Activated T-helper 1 cell treated with anti-CD3 and anti-CD28 coated beads, Interleukin-12 subunit alpha, Interleukin-12 subunit beta, Interleukin-2, Interleukin-4 antibody, amounts not matched to agents 30 ng/mL and 10 ng/mL and 1 ng/mL, durations not matched to agents 14 hours and 24 hours and 36 hours (primary cell): ENCODE measurements at regions of chr9 and their contacts with region 1.

Region 1: DNA sequence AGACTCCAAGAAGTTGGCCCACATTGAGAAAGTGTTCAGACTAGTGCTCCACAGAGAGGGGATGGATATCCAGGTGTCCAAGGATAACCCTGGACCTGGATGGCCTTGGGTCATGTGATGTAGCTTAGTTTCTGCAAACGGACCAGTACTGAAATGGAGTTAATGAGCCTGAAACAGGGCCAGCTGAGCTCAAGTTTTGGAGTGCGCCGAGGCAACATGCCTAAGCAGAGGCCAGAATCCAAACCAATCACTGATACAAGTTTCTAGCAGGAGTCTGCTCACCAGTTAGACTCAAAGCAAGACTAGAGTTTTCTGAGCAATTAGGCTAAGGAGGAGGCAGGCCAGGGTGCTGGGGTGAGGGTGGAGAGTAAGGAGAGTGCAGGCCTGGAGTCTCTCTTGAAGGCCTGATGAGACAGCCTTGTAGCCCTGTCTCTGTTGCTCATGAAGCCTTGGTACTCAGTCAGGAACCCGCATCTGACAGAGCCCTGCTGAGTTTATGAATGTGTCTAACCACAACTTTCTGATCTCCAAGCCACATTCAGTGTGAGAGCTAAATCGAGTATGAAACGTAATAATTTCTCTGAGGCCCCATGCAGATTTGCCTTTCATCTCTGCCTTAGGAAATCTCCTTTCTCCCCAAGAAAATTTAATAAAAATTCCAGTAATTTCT is 68.9 kb upstream of the EQTN start:
- DNase-seq: peak; percentile 49
- H3K4me3 Mint-ChIP-seq: peak overlapping the region; percentile 9
- H3K27ac Mint-ChIP-seq: peak overlapping the region; percentile 56
- H3K4me1 Mint-ChIP-seq: peaks cover 32% of the 10 kb centered on the region
- H3K27me3 Mint-ChIP-seq: peaks cover 10% of the 10 kb centered on the region

Region 2: DNA sequence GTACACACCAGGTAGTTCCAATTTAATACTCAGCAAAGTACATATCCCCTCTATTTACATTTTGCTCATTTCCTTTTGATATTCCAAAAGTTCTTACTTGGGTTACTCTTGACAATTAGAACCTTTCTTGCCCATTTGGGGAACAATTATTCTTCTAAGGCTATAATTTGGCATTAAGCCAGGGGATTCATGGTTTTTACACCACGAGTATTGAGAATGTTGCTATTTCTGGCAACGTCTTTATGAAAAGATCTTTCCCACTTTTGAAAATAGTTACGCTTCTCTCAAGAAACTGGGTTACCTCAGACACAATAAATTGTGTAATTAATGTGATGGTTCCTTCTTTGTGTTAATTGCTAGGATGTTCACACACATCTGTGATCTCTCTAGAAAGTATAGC is 461.8 kb before region 1 on chr9:
- intact Hi-C with region 1: no loop called
- DNase-seq: no peak
- H3K4me3 Mint-ChIP-seq: no peak overlapping the region
- H3K27ac Mint-ChIP-seq: peak overlapping the region; percentile 2
- H3K4me1 Mint-ChIP-seq: no peaks in the 10 kb centered on the region
- H3K27me3 Mint-ChIP-seq: no peaks in the 10 kb centered on the region

Region 3: DNA sequence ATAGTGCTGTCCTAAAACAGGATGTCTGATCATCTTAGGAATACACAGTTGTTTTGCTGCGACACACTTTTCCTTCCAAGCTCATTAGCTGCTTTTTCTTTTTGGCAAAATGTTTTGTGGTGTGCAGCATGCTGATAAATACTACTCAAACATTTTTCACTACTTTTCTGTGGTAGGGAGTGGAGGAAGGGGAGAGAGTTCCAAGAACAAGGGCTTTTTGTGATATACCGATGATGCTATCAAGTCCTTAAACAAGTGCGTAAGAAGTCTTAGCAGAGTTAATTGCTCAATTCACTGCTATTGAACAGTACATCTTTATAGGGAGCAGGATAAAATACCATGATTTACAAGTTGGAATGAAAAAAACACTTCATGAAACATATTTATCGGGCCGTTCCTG is 280.4 kb before region 1 on chr9:
- intact Hi-C with region 1: no loop called
- DNase-seq: no peak
- H3K4me3 Mint-ChIP-seq: no peak overlapping the region
- H3K27ac Mint-ChIP-seq: no peak overlapping the region
- H3K4me1 Mint-ChIP-seq: no peaks in the 10 kb centered on the region
- H3K27me3 Mint-ChIP-seq: no peaks in the 10 kb centered on the region

Region 4: GRCh38 chr9:27276193-27277030 is 89.4 kb before region 1 on chr9:
- intact Hi-C with region 1: no loop called
- DNase-seq: no peak
- H3K4me3 Mint-ChIP-seq: no peak overlapping the region
- H3K27ac Mint-ChIP-seq: no peak overlapping the region
- H3K4me1 Mint-ChIP-seq: peaks cover 8% of the 10 kb centered on the region
- H3K27me3 Mint-ChIP-seq: peaks cover 11% of the 10 kb centered on the region

Region 5: DNA sequence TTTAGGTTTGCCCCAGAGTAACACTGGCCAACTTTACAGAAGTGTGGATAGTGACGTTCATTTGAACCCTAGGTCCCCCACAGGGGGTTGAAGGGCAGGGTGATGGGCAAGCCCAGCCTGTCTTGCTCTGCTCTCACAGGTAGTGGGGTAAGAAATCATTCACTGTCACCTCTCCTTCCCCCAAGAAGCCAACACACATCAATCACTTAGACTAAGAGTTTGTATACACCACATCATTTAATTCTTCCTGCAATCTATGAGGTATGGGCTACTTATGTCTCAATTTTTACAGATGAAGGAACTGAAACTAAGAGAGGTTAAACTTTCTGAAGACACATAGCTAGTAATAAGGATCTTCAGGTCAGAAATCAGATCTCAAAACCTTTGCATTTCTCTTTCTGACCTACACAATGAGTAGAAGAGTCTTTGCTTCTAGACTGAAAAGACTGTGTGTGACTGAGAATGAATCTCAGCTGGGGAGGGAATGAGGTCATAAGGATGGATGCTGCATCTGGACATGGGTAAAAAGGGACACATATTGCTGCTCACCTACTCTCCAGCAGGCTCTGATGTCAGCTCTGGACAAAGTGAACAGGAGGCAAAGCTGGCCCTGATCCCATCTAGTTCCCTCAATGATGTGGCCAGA is 12.1 kb after region 1 on chr9:
- intact Hi-C with region 1: loop called (anchors 1 kb)
- DNase-seq: no peak
- H3K4me3 Mint-ChIP-seq: no peak overlapping the region
- H3K27ac Mint-ChIP-seq: no peak overlapping the region
- H3K4me1 Mint-ChIP-seq: peaks cover 31% of the 10 kb centered on the region
- H3K27me3 Mint-ChIP-seq: peaks cover 21% of the 10 kb centered on the region

Region 6: GRCh38 chr9:27499481-27499880 is 133.6 kb after region 1 on chr9:
- intact Hi-C with region 1: loop called (anchors 1 kb)
- DNase-seq: no peak
- H3K4me3 Mint-ChIP-seq: no peak overlapping the region
- H3K27ac Mint-ChIP-seq: no peak overlapping the region
- H3K4me1 Mint-ChIP-seq: peaks cover 22% of the 10 kb centered on the region
- H3K27me3 Mint-ChIP-seq: peaks cover 2% of the 10 kb centered on the region

Region 7: GRCh38 chr9:27785714-27786100 is 419.9 kb after region 1 on chr9:
- intact Hi-C with region 1: loop called (anchors 5 kb)
- DNase-seq: no peak
- H3K4me3 Mint-ChIP-seq: no peak overlapping the region
- H3K27ac Mint-ChIP-seq: peak overlapping the region; percentile 59
- H3K4me1 Mint-ChIP-seq: peaks cover 14% of the 10 kb centered on the region
- H3K27me3 Mint-ChIP-seq: peaks cover 5% of the 10 kb centered on the region

Region 8: GRCh38 chr9:28539432-28540070 is 1173.7 kb after region 1 on chr9:
- intact Hi-C with region 1: no loop called
- DNase-seq: no peak
- H3K4me3 Mint-ChIP-seq: no peak overlapping the region
- H3K27ac Mint-ChIP-seq: no peak overlapping the region
- H3K4me1 Mint-ChIP-seq: no peaks in the 10 kb centered on the region
- H3K27me3 Mint-ChIP-seq: no peaks in the 10 kb centered on the region